ENCODE measurements at regions of chr11 and their contacts with region 1.

Region 1: DNA sequence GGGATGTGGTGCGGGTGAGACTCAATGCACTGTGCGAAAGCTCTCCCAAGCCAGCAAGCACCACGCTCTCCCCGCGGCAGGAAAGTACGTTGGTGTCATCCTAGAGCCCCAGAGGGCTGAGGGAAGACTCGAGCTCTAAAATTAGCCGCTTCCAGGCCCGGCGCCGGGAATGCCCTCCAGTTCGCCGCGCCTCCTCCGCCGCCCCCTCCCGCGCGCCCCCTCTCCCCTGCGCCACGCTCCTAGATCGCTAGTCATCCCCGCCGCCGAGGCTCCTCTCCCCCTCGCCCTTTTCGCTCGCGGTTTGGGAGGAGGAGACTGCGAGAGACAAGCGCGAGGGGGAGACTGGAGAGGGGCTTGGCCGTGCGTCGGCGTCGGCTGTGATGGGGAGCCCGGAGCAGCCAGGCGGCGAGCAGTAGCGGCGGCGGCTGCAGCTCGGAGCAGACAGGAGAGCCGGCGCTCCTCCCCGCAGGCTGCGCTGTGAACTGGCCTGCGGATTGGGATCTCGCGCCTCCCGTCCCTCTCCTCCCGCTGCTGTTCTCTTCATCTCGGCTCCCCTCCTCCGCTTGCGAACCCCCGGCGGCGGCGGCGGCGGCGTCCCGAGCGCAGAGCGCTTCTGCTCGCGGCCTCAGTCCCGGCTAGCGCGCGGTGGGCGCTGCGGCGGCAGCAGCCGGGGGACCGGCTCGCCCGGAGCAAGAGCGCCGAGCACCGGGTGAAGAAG is at the start of gene FAT3:
- DNase-seq: peak in 1 of 2 donors; percentile 71
- H3K4me3 ChIP-seq: peak within 1 kb of the TSS; percentile 73 to 82
- H3K27ac ChIP-seq: peak within 1 kb of the TSS; percentile 89
- H3K4me1 ChIP-seq: peaks cover 0 to 39% (median 12%) of the 10 kb centered on the region in 4 donors
- H3K27me3 ChIP-seq: no peaks in the 10 kb centered on the region
- CTCF ChIP-seq: no peak

Region 2: GRCh38 chr11:92329646-92330045 is 105.1 kb after region 1 on chr11:
- intact Hi-C with region 1: loop called (anchors 5 kb)
- DNase-seq: no peak
- H3K4me3 ChIP-seq: no peak overlapping the region
- H3K27ac ChIP-seq: peak overlapping the region in 1 of 2 donors; percentile 53
- H3K4me1 ChIP-seq: peaks cover 0 to 47% (median 9%) of the 10 kb centered on the region in 4 donors
- H3K27me3 ChIP-seq: no peaks in the 10 kb centered on the region
- CTCF ChIP-seq: no peak